ENCODE measurements at regions of chr10 and their contacts with region 1.

Region 1: GRCh38 chr10:121994390-121994961 is 5.5 kb downstream of the TACC2 start:
- DNase-seq: peak in 1 of 2 donors; percentile 66
- ATAC-seq: peak; percentile 76
- H3K4me3 ChIP-seq: peak overlapping the region in 1 of 2 donors; percentile 60
- H3K27ac ChIP-seq: peak overlapping the region; percentile 65 to 70
- H3K4me1 ChIP-seq: peaks cover 4 to 9% of the 10 kb centered on the region in 2 donors
- H3K27me3 ChIP-seq: no peaks in the 10 kb centered on the region

Region 2: GRCh38 chr10:121337427-121337826 is 657.0 kb before region 1 on chr10:
- intact Hi-C with region 1: no loop called
- DNase-seq: no peak
- ATAC-seq: peak; percentile 15
- H3K4me3 ChIP-seq: no peak overlapping the region
- H3K27ac ChIP-seq: no peak overlapping the region
- H3K4me1 ChIP-seq: peaks cover 0 to 7% of the 10 kb centered on the region in 2 donors
- H3K27me3 ChIP-seq: no peaks in the 10 kb centered on the region

Region 3: GRCh38 chr10:122044045-122044661 is 49.7 kb after region 1 on chr10:
- intact Hi-C with region 1: loop called (anchors 5 to 10 kb)
- DNase-seq: peak in 1 of 2 donors; percentile 58
- ATAC-seq: peak; percentile 70
- H3K4me3 ChIP-seq: peak overlapping the region in 1 of 2 donors; percentile 1
- H3K27ac ChIP-seq: peak overlapping the region; percentile 70 to 87
- H3K4me1 ChIP-seq: no peaks in the 10 kb centered on the region
- H3K27me3 ChIP-seq: no peaks in the 10 kb centered on the region

Region 4: DNA sequence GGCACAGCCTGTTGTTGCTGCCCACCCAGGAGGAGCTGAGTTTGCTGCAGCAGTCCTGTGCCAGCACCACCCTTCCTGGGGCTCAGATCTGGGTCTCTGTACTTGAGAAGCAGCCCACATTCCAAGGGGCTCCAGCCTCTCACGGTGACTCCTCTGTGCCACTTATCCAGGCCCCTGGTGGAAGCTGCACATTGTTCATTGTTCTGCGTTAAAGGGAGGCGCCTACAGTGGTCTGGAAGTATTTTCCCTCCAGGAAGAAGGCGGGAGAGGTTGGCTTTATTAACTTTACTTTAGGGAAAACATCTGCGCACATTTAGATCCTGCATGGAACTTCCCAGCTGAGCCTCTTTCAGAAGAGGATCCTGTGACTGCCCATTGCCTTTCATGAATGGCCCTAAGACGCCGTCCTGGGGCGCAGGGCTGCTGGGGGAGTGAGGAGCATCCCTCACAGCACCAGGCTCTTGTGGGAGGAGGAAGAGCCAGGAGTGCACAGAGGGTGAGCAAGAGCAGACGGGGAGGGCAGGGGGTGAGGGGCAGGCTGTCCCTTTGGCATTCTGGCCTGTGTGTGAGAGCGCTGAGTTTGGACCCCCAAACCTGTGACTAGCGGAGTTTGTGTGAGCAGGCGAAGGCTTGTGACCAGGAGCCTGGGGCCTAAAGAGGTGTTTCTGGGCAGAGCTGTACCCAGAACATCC is 178.0 kb after region 1 on chr10:
- intact Hi-C with region 1: no loop called
- DNase-seq: no peak
- ATAC-seq: no peak
- H3K4me3 ChIP-seq: no peak overlapping the region
- H3K27ac ChIP-seq: no peak overlapping the region
- H3K4me1 ChIP-seq: peaks cover 0 to 8% of the 10 kb centered on the region in 2 donors
- H3K27me3 ChIP-seq: no peaks in the 10 kb centered on the region

Measured in aorta (tissue), 5 donors.